ENCODE measurements at regions of chr20 and their contacts with region 1.

Region 1: GRCh38 chr20:38893565-38894090 is 32.6 kb upstream of the FAM83D start:
- DNase-seq: peak; percentile 89
- ATAC-seq: peak; percentile 88
- H3K4me3 Mint-ChIP-seq: peak overlapping the region; percentile 51
- H3K27ac Mint-ChIP-seq: no peak overlapping the region
- H3K4me1 Mint-ChIP-seq: peaks cover 14% of the 10 kb centered on the region
- H3K27me3 Mint-ChIP-seq: peaks cover 3% of the 10 kb centered on the region; the same call in 1 of the 2 replicates
- CTCF ChIP-seq: peak; percentile 94

Region 2: DNA sequence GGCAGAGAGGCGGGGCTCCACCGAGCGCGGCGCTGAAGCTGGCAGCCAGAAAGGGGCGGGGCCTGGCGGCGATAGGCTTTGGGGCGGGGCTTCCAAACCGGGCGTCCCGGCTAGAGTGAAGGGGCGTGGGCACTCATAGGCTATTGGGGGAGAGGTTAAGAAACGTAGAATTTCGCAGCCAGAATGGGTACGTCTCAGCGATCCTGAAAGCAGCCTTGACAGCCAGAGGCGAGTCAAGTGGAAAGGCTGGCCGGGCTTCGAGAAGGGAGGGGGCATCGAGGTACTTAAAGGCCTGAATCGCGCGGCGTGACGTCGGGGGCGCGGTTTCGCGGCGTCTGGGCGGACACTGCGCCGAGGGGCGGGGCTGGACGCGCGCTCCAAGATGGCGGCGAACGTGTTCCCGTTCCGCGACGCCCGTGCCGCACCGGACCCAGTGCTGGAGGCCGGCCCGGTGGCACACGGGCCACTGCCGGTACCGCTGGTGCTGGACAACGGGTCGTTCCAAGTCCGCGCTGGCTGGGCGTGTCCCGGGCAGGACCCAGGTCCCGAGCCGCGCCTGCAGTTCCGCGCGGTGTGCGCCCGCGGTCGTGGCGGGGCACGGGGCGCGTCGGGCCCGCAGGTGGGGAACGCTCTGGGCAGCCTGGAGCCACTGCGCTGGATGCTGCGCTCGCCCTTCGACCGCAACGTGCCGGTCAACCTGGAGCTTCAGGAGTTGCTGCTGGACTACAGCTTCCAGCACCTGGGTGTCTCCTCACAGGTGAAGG is 145.3 kb before region 1 on chr20 and contains the start of gene ACTR5:
- CTCF ChIA-PET with region 1: interaction called, 10 read pairs
- POLR2A ChIA-PET with region 1: no interaction called
- DNase-seq: peak; percentile 97
- ATAC-seq: peak; percentile 94
- H3K4me3 Mint-ChIP-seq: peak within 1 kb of the TSS; percentile 96
- H3K27ac Mint-ChIP-seq: peak within 1 kb of the TSS; percentile 99
- H3K4me1 Mint-ChIP-seq: peaks cover 20% of the 10 kb centered on the region
- H3K27me3 Mint-ChIP-seq: peaks cover 32% of the 10 kb centered on the region
- CTCF ChIP-seq: no peak
- total RNA-seq, gene ACTR5: 9.8 to 12.0 TPM (median 11.5 TPM) in 3 replicates

Region 3: GRCh38 chr20:38805502-38805957 is 88.1 kb before region 1 on chr20 and contains the start of gene PPP1R16B:
- CTCF ChIA-PET with region 1: interaction called, 39 read pairs
- POLR2A ChIA-PET with region 1: interaction called, 5 read pairs
- DNase-seq: peak; percentile 81
- ATAC-seq: peak; percentile 79
- H3K4me3 Mint-ChIP-seq: peak within 1 kb of the TSS; percentile 82
- H3K27ac Mint-ChIP-seq: peak within 1 kb of the TSS; percentile 97
- H3K4me1 Mint-ChIP-seq: peaks cover 37% of the 10 kb centered on the region
- H3K27me3 Mint-ChIP-seq: peaks cover 31% of the 10 kb centered on the region
- CTCF ChIP-seq: no peak
- total RNA-seq, gene PPP1R16B: 8.1 to 12.0 TPM (median 8.2 TPM) in 3 replicates

Region 4: GRCh38 chr20:38861071-38861401 is 32.6 kb before region 1 on chr20:
- CTCF ChIA-PET with region 1: interaction called, 17 read pairs
- POLR2A ChIA-PET with region 1: no interaction called
- DNase-seq: no peak
- ATAC-seq: no peak
- H3K4me3 Mint-ChIP-seq: no peak overlapping the region
- H3K27ac Mint-ChIP-seq: peak overlapping the region; percentile 74
- H3K4me1 Mint-ChIP-seq: peaks cover 24% of the 10 kb centered on the region
- H3K27me3 Mint-ChIP-seq: no peaks in the 10 kb centered on the region; the same call in 1 of the 2 replicates
- CTCF ChIP-seq: no peak

Region 5: DNA sequence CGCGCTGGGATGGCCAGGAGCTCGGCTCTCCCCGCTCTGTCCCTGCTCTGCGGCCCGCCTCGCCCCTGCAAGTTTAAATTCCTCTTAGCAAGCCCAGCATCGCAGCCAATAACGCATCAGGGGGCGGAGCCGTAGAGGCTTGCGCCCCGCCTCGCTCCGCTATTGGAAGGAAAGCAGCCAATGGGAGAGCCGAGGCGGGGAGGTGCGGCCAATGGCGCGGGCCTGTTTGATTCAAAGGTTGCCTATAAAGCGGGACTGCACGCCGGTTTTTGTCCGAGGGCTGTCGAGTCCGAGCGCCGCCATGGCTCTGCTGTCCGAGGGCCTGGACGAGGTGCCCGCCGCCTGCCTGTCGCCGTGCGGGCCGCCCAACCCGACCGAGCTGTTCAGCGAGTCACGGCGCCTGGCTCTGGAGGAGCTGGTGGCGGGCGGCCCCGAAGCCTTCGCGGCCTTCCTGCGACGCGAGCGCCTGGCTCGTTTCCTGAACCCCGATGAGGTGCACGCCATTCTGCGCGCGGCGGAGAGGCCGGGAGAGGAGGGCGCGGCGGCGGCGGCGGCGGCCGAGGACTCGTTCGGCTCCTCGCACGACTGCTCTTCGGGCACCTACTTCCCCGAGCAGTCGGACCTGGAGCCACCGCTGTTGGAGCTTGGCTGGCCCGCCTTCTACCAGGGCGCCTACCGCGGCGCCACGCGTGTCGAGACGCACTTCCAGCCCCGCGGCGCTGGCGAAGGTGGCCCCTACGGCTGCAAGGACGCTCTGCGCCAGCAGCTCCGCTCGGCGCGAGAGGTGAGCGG is 32.7 kb after region 1 on chr20 and contains the start of gene FAM83D:
- CTCF ChIA-PET with region 1: interaction called, 10 read pairs
- POLR2A ChIA-PET with region 1: interaction called, 3 read pairs
- DNase-seq: peak; percentile 99
- ATAC-seq: peak; percentile 94
- H3K4me3 Mint-ChIP-seq: peak within 1 kb of the TSS; percentile 86
- H3K27ac Mint-ChIP-seq: no peak within 1 kb of the TSS
- H3K4me1 Mint-ChIP-seq: peaks cover 32% of the 10 kb centered on the region
- H3K27me3 Mint-ChIP-seq: no peaks in the 10 kb centered on the region
- CTCF ChIP-seq: no peak; the same call in 1 of the 2 replicates
- total RNA-seq, gene FAM83D: 57.7 to 66.9 TPM (median 58.3 TPM) in 3 replicates

Region 6: GRCh38 chr20:38987777-38988176 is 94.1 kb after region 1 on chr20:
- CTCF ChIA-PET with region 1: no interaction called
- POLR2A ChIA-PET with region 1: no interaction called
- DNase-seq: no peak
- ATAC-seq: no peak
- H3K4me3 Mint-ChIP-seq: no peak overlapping the region
- H3K27ac Mint-ChIP-seq: peak overlapping the region; percentile 87
- H3K4me1 Mint-ChIP-seq: peaks cover 17% of the 10 kb centered on the region
- H3K27me3 Mint-ChIP-seq: no peaks in the 10 kb centered on the region
- CTCF ChIP-seq: no peak

Region 7: DNA sequence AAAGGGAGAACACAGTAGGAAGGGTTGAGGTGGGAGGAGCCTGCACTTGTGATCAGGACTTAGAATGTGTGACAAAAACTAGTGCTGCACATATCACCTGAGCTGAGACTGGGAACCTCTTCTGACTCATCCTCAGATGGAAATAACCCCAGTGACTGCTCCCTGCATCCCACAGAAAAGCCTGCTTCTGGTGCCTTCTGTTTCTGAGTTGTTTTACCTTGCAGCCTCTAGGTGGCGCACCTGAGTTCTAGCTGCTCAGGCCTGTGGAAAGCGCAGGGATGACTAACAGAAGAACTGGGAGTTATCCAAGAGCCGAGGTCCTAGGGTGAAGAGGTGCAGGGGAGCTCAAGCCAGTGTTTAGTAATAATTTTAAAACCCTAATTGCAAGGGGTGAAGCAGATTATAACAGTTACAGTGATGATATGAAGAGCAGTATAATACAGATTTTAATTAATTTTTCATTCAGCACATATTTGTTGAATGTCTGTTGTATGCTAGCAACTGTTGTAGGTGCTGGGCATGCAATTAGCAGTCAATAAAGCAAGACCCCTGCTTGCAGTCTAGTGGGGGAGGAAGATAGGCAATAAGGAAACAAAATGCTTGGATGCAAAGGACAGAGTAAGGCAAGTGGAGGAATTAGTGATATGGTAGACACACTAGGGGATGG is 371.0 kb after region 1 on chr20:
- CTCF ChIA-PET with region 1: no interaction called
- POLR2A ChIA-PET with region 1: no interaction called
- DNase-seq: peak; percentile 66
- ATAC-seq: peak; percentile 69
- H3K4me3 Mint-ChIP-seq: no peak overlapping the region
- H3K27ac Mint-ChIP-seq: no peak overlapping the region
- H3K4me1 Mint-ChIP-seq: peaks cover 5% of the 10 kb centered on the region
- H3K27me3 Mint-ChIP-seq: no peaks in the 10 kb centered on the region
- CTCF ChIP-seq: peak; percentile 91

Measured in WTC11 (cell line).